PC-3 (cell line): ENCODE measurements at regions of chr14 and their contacts with region 1.

Region 1: GRCh38 chr14:44795725-44796124 is 166.0 kb downstream of the KLHL28 start:
- DNase-seq: peak; percentile 75
- ATAC-seq: peak; percentile 94
- H3K4me3 ChIP-seq: no peak overlapping the region
- H3K27ac ChIP-seq: no peak overlapping the region
- H3K4me1 ChIP-seq: 0 out of 2 replicates have a peak, but pooled peaks cover 13% of the 10 kb centered on the region
- H3K27me3 ChIP-seq: no peaks in the 10 kb centered on the region
- CTCF ChIP-seq: no peak

Region 2: GRCh38 chr14:43786066-43786762 is 1009.5 kb before region 1 on chr14:
- CTCF ChIA-PET with region 1: interaction called, 11 read pairs
- POLR2A ChIA-PET with region 1: no interaction called
- intact Hi-C with region 1: no loop called
- DNase-seq: no peak
- ATAC-seq: no peak
- H3K4me3 ChIP-seq: no peak overlapping the region
- H3K27ac ChIP-seq: no peak overlapping the region
- H3K4me1 ChIP-seq: no peaks in the 10 kb centered on the region
- H3K27me3 ChIP-seq: no peaks in the 10 kb centered on the region
- CTCF ChIP-seq: no peak

Region 3: GRCh38 chr14:44404036-44404435 is 391.7 kb before region 1 on chr14:
- CTCF ChIA-PET with region 1: no interaction called
- POLR2A ChIA-PET with region 1: no interaction called
- intact Hi-C with region 1: no loop called
- DNase-seq: peak; percentile 87
- ATAC-seq: peak; percentile 95
- H3K4me3 ChIP-seq: no peak overlapping the region
- H3K27ac ChIP-seq: no peak overlapping the region
- H3K4me1 ChIP-seq: peaks cover 8% of the 10 kb centered on the region
- H3K27me3 ChIP-seq: no peaks in the 10 kb centered on the region
- CTCF ChIP-seq: no peak

Region 4: GRCh38 chr14:44833376-44834060 is 37.8 kb after region 1 on chr14:
- CTCF ChIA-PET with region 1: no interaction called
- POLR2A ChIA-PET with region 1: no interaction called
- intact Hi-C with region 1: no loop called
- DNase-seq: peak; percentile 73
- ATAC-seq: peak; percentile 85
- H3K4me3 ChIP-seq: no peak overlapping the region
- H3K27ac ChIP-seq: peak overlapping the region; percentile 19; the same call in 1 of the 2 replicates
- H3K4me1 ChIP-seq: peaks cover 16% of the 10 kb centered on the region
- H3K27me3 ChIP-seq: no peaks in the 10 kb centered on the region
- CTCF ChIP-seq: no peak